ENCODE measurements at regions of chr2 and their contacts with region 1.

Region 1: GRCh38 chr2:134897932-134898331 is 20.7 kb upstream of the CCNT2 start:
- DNase-seq: no peak
- H3K4me3 ChIP-seq: no peak overlapping the region
- H3K27ac ChIP-seq: no peak overlapping the region
- H3K4me1 ChIP-seq: no peaks in the 10 kb centered on the region
- H3K27me3 ChIP-seq: no peaks in the 10 kb centered on the region
- CTCF ChIP-seq: peak in 4 of 5 experiments; percentile 14 to 30 (median 16)
- EP300 ChIP-seq: no peak
- POLR2A ChIP-seq: no peak

Region 2: GRCh38 chr2:134460583-134460998 is 437.3 kb before region 1 on chr2:
- in situ Hi-C with region 1: loop called in 3 of 4 experiments (anchors 25 kb)
- intact Hi-C with region 1: no loop called
- DNase-seq: peak; percentile 31
- H3K4me3 ChIP-seq: no peak overlapping the region
- H3K27ac ChIP-seq: no peak overlapping the region
- H3K4me1 ChIP-seq: peaks cover 0 to 5% (median 0%) of the 10 kb centered on the region in 4 donors
- H3K27me3 ChIP-seq: no peaks in the 10 kb centered on the region
- CTCF ChIP-seq: peak in 4 of 5 experiments; percentile 36 to 54 (median 48)
- EP300 ChIP-seq: no peak
- POLR2A ChIP-seq: no peak

Region 3: GRCh38 chr2:135055182-135055786 is 157.4 kb after region 1 on chr2:
- in situ Hi-C with region 1: no loop called
- intact Hi-C with region 1: no loop called
- DNase-seq: no peak
- H3K4me3 ChIP-seq: no peak overlapping the region
- H3K27ac ChIP-seq: peak overlapping the region in 1 of 4 donors; percentile 0
- H3K4me1 ChIP-seq: peaks cover 17 to 44% (median 22%) of the 10 kb centered on the region in 4 donors
- H3K27me3 ChIP-seq: no peaks in the 10 kb centered on the region
- CTCF ChIP-seq: no peak
- EP300 ChIP-seq: no peak
- POLR2A ChIP-seq: no peak

Region 4: DNA sequence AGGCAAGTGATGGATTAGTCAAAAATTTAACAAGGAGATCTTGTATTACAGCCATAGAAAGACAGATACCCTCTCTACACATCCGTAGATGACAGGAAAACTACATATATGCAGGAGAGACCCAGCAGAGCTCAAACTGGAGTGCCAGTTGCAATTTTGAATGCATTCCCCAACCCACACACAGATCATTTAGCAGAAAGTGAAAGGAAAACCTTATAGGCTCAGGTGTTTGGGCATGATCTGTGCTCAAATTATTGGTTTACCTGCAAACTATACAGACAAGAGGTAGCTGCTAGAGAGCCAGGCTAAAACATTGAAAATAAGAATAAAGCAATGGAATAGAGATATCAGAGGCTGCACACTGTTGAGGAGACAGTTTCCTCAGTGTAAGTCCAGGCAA is 205.9 kb after region 1 on chr2:
- in situ Hi-C with region 1: no loop called
- intact Hi-C with region 1: no loop called
- DNase-seq: no peak
- H3K4me3 ChIP-seq: no peak overlapping the region
- H3K27ac ChIP-seq: no peak overlapping the region
- H3K4me1 ChIP-seq: peaks cover 3 to 7% (median 5%) of the 10 kb centered on the region in 4 donors
- H3K27me3 ChIP-seq: no peaks in the 10 kb centered on the region
- CTCF ChIP-seq: no peak
- EP300 ChIP-seq: no peak
- POLR2A ChIP-seq: no peak